Ovary (tissue), 10 donors: ENCODE measurements at regions of chr1 and their contacts with region 1.

Region 1: GRCh38 chr1:192678099-192678498 is 42.2 kb downstream of the RGS13 start:
- DNase-seq: no peak
- H3K4me3 ChIP-seq: no peak overlapping the region
- H3K27ac ChIP-seq: no peak overlapping the region
- H3K4me1 ChIP-seq: no peaks in the 10 kb centered on the region
- H3K27me3 ChIP-seq: no peaks in the 10 kb centered on the region
- CTCF ChIP-seq: no peak
- EP300 ChIP-seq: no peak
- POLR2A ChIP-seq: no peak

Region 2: GRCh38 chr1:192633533-192634253 is 44.4 kb before region 1 on chr1:
- intact Hi-C with region 1: loop called in 1 of 4 experiments (anchors 1 kb)
- DNase-seq: no peak
- H3K4me3 ChIP-seq: no peak overlapping the region
- H3K27ac ChIP-seq: no peak overlapping the region
- H3K4me1 ChIP-seq: no peaks in the 10 kb centered on the region
- H3K27me3 ChIP-seq: no peaks in the 10 kb centered on the region
- CTCF ChIP-seq: no peak
- EP300 ChIP-seq: no peak
- POLR2A ChIP-seq: no peak